ENCODE measurements at regions of chr1 and their contacts with region 1.

Region 1: DNA sequence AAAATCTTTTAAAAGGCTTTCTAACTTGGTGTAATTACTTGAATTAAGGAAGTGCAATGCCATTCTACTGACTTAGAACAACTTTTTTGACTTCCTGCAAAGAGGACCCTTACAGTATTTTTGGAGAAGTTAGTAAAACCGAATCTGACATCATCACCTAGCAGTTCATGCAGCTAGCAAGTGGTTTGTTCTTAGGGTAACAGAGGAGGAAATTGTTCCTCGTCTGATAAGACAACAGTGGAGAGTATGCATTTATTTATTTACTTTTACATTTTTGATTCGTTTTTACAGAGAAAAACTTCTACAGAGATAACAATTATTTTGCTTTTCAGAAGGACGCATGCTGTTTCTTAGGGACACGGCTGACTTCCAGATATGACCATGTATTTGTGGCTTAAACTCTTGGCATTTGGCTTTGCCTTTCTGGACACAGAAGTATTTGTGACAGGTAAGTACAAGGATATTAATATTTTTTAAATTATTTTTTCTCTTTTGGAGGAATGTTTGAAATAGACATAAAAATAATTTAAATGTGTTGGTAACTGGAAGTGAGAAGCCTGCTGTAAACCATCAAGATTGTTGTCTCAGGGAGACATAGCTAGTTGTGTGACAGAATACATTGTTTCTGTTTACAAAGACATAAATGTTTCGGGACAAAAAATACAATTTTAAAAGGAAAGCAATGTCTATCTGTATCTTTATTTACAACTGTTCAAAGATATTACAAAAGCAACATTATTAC is at the start of gene PTPRC:
- DNase-seq: peak in 7 of 9 donors; percentile 46 to 78 (median 68)
- ATAC-seq: peak; percentile 81
- H3K4me3 ChIP-seq: peak within 1 kb of the TSS; percentile 81
- H3K4me3 Mint-ChIP-seq: peak within 1 kb of the TSS; percentile 77 to 100 (median 92)
- H3K27ac ChIP-seq: peak within 1 kb of the TSS; percentile 94
- H3K27ac Mint-ChIP-seq: peak within 1 kb of the TSS; percentile 86 to 98 (median 96)
- H3K4me1 ChIP-seq: peaks cover 31 to 40% of the 10 kb centered on the region in 2 donors
- H3K4me1 Mint-ChIP-seq: peaks cover 39 to 60% (median 52%) of the 10 kb centered on the region in 7 donors
- H3K27me3 ChIP-seq: no peaks in the 10 kb centered on the region
- H3K27me3 Mint-ChIP-seq: no peaks in the 10 kb centered on the region
- total RNA-seq, gene PTPRC: 739 to 1,121 (median 1,015) TPM

Region 2: DNA sequence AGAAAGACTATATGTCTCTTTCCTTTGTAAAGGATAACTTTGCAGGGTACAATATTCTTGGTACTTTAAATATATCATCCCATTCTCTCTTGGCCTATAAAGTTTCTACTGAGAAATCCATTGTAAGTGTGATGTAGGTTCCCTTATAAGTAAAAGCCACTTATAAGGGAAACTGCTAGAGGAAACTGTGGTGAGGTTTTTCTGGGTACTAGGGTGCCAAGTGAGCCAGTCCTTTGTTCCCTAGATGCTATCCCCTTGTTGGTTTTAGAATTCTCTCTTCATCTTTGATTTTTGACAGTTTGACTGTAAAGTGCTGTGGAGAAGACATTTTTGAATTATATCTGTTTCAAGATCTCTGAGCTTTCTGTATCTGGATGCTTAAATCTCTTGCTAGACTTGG is 591.2 kb before region 1 on chr1:
- CTCF ChIA-PET with region 1: no interaction called
- POLR2A ChIA-PET with region 1: no interaction called
- intact Hi-C with region 1: no loop called
- DNase-seq: peak in 5 of 9 donors; percentile 4 to 35 (median 10)
- ATAC-seq: peak; percentile 54
- H3K4me3 ChIP-seq: no peak overlapping the region
- H3K4me3 Mint-ChIP-seq: peak overlapping the region in 3 of 10 donors; percentile 1 to 51 (median 9)
- H3K27ac ChIP-seq: no peak overlapping the region
- H3K27ac Mint-ChIP-seq: peak overlapping the region in 3 of 9 donors; percentile 22 to 77 (median 62)
- H3K4me1 ChIP-seq: peaks cover 0 to 7% of the 10 kb centered on the region in 2 donors
- H3K4me1 Mint-ChIP-seq: peaks cover 5 to 18% (median 14%) of the 10 kb centered on the region in 7 donors
- H3K27me3 ChIP-seq: no peaks in the 10 kb centered on the region
- H3K27me3 Mint-ChIP-seq: peaks cover 0 to 2% (median 0%) of the 10 kb centered on the region in 5 donors

Region 3: DNA sequence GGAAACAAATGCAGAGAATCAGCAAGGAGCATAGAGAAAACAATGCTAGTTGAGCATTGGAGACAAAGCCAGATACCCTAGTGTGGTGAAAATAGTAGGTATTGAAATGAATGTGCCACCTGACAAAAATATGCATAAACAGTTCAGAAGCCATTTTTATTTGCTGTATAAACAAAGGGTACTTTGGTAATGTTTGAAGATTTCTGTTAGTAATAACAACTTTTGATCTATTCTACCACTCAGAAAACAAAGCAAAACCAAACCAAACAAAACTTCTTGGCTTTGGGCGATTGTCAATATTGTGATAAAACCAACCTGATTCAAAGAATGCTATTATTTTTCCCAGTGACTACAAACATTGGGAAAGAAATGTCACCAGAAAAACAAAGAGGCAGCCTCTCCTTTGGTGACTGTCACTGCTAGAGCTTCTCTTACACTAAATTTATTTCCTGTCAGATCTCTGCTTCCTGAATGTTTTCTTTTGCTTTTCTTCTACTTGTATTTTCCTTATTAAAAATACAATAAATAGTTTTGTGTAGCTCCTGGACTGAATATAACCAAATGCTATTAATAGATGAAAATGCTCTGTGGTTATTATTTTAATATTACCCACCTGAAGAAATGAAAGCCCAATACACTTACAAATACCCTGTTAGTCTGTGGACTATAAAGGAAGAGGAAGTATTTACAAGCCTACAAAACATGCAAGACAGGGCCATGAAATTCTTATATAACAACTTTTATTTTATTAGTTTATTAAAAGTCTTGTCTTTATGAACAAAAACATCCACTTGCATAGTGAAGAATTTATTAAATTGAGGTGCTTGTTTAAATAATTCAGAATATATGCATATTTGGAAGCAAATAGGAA is 104.3 kb before region 1 on chr1:
- CTCF ChIA-PET with region 1: no interaction called
- POLR2A ChIA-PET with region 1: interaction called, 10 read pairs
- intact Hi-C with region 1: no loop called
- DNase-seq: peak in 1 of 9 donors; percentile 26
- ATAC-seq: peak; percentile 47
- H3K4me3 ChIP-seq: no peak overlapping the region
- H3K4me3 Mint-ChIP-seq: peak overlapping the region; percentile 29 to 83 (median 74)
- H3K27ac ChIP-seq: peak overlapping the region; percentile 65
- H3K27ac Mint-ChIP-seq: peak overlapping the region; percentile 55 to 91 (median 82)
- H3K4me1 ChIP-seq: peaks cover 22 to 48% of the 10 kb centered on the region in 2 donors
- H3K4me1 Mint-ChIP-seq: peaks cover 49 to 96% (median 90%) of the 10 kb centered on the region in 7 donors
- H3K27me3 ChIP-seq: no peaks in the 10 kb centered on the region
- H3K27me3 Mint-ChIP-seq: no peaks in the 10 kb centered on the region

Region 4: GRCh38 chr1:198598796-198599321 is 40.2 kb before region 1 on chr1:
- CTCF ChIA-PET with region 1: interaction called, 3 read pairs
- POLR2A ChIA-PET with region 1: interaction called, 6 read pairs
- intact Hi-C with region 1: loop called in 1 of 2 experiments (anchors 2 kb)
- DNase-seq: peak in 1 of 9 donors; percentile 22
- ATAC-seq: peak; percentile 57
- H3K4me3 ChIP-seq: peak overlapping the region; percentile 11
- H3K4me3 Mint-ChIP-seq: peak overlapping the region in 9 of 10 donors; percentile 18 to 84 (median 61)
- H3K27ac ChIP-seq: peak overlapping the region; percentile 55
- H3K27ac Mint-ChIP-seq: peak overlapping the region; percentile 58 to 96 (median 93)
- H3K4me1 ChIP-seq: peaks cover 34 to 65% of the 10 kb centered on the region in 2 donors
- H3K4me1 Mint-ChIP-seq: peaks cover 49 to 95% (median 91%) of the 10 kb centered on the region in 7 donors
- H3K27me3 ChIP-seq: no peaks in the 10 kb centered on the region
- H3K27me3 Mint-ChIP-seq: no peaks in the 10 kb centered on the region

Region 5: GRCh38 chr1:198612471-198613260 is 26.4 kb before region 1 on chr1:
- CTCF ChIA-PET with region 1: interaction called, 4 read pairs
- POLR2A ChIA-PET with region 1: interaction called, 21 read pairs
- intact Hi-C with region 1: no loop called
- DNase-seq: peak in 6 of 9 donors; percentile 30 to 52 (median 41)
- ATAC-seq: peak; percentile 62
- H3K4me3 ChIP-seq: peak overlapping the region; percentile 44
- H3K4me3 Mint-ChIP-seq: peak overlapping the region; percentile 66 to 97 (median 82)
- H3K27ac ChIP-seq: peak overlapping the region; percentile 82
- H3K27ac Mint-ChIP-seq: peak overlapping the region; percentile 95 to 100 (median 98)
- H3K4me1 ChIP-seq: peaks cover 56 to 71% of the 10 kb centered on the region in 2 donors
- H3K4me1 Mint-ChIP-seq: peaks cover 52 to 92% (median 73%) of the 10 kb centered on the region in 7 donors
- H3K27me3 ChIP-seq: no peaks in the 10 kb centered on the region
- H3K27me3 Mint-ChIP-seq: no peaks in the 10 kb centered on the region

Region 6: DNA sequence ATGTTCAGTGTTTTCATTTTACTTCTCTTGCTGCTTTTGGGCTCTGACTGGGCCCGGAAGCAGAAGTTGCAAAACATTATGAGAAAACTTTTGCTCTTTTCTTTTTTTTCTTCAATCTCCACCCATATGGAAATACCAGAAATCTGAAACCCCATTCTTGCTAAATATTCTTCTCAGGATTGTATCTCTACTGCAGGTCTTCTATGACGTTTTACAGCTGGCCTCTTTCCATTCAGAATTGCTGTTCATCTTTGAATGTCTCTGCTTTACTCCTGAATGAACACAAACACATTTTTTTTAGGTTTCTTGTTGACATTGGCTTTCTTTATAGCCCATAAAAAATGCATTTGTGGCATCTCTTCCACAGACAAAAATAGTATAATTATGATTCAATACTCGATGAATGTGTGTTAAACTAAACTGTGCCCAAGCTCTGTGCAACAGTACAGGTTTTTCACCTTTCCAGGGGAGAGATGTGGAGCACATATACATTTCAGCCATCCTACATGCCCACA is 18.5 kb after region 1 on chr1:
- CTCF ChIA-PET with region 1: interaction called, 3 read pairs
- POLR2A ChIA-PET with region 1: interaction called, 53 read pairs
- intact Hi-C with region 1: loop called (anchors 1 kb)
- DNase-seq: peak in 6 of 9 donors; percentile 59 to 83 (median 70)
- ATAC-seq: peak; percentile 65
- H3K4me3 ChIP-seq: peak overlapping the region; percentile 40
- H3K4me3 Mint-ChIP-seq: peak overlapping the region; percentile 49 to 87 (median 82)
- H3K27ac ChIP-seq: peak overlapping the region; percentile 94
- H3K27ac Mint-ChIP-seq: peak overlapping the region; percentile 90 to 99 (median 97)
- H3K4me1 ChIP-seq: peaks cover 65 to 78% of the 10 kb centered on the region in 2 donors
- H3K4me1 Mint-ChIP-seq: peaks cover 36 to 90% (median 73%) of the 10 kb centered on the region in 7 donors
- H3K27me3 ChIP-seq: no peaks in the 10 kb centered on the region
- H3K27me3 Mint-ChIP-seq: no peaks in the 10 kb centered on the region

Region 7: GRCh38 chr1:198771563-198772153 is 132.6 kb after region 1 on chr1:
- CTCF ChIA-PET with region 1: no interaction called
- POLR2A ChIA-PET with region 1: no interaction called
- intact Hi-C with region 1: no loop called
- DNase-seq: no peak
- ATAC-seq: peak; percentile 40
- H3K4me3 ChIP-seq: no peak overlapping the region
- H3K4me3 Mint-ChIP-seq: no peak overlapping the region
- H3K27ac ChIP-seq: no peak overlapping the region
- H3K27ac Mint-ChIP-seq: no peak overlapping the region
- H3K4me1 ChIP-seq: no peaks in the 10 kb centered on the region
- H3K4me1 Mint-ChIP-seq: peaks cover 0 to 12% (median 3%) of the 10 kb centered on the region in 7 donors
- H3K27me3 ChIP-seq: no peaks in the 10 kb centered on the region
- H3K27me3 Mint-ChIP-seq: peaks cover 0 to 3% (median 0%) of the 10 kb centered on the region in 5 donors

Region 8: DNA sequence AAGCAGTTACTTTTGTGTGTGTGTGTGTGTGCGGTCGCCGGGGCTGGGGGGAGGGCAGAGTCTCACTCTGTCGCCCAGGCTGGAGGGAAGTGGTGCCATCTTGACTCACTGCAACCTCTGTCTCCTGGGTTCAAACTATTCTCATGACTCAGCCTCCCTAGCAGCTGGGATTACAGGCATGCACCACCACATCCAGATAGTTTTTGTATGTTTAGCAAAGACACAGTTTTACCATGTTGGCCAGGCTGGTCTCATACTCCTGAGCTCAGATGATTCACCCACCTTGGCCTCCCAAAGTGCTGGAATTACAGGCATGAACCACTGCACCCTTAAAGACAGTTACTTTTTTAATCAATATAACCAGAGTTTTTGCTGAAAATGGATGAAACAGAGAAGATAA is 206.8 kb after region 1 on chr1:
- CTCF ChIA-PET with region 1: no interaction called
- POLR2A ChIA-PET with region 1: no interaction called
- intact Hi-C with region 1: no loop called
- DNase-seq: no peak
- ATAC-seq: no peak
- H3K4me3 ChIP-seq: no peak overlapping the region
- H3K4me3 Mint-ChIP-seq: no peak overlapping the region
- H3K27ac ChIP-seq: no peak overlapping the region
- H3K27ac Mint-ChIP-seq: peak overlapping the region in 1 of 9 donors; percentile 14
- H3K4me1 ChIP-seq: no peaks in the 10 kb centered on the region
- H3K4me1 Mint-ChIP-seq: peaks cover 0 to 8% (median 0%) of the 10 kb centered on the region in 7 donors
- H3K27me3 ChIP-seq: no peaks in the 10 kb centered on the region
- H3K27me3 Mint-ChIP-seq: no peaks in the 10 kb centered on the region

Measured in naive thymus-derived CD4-positive, alpha-beta T cell (primary cell).